Body of pancreas (tissue), 4 donors: ENCODE measurements at regions of chr20 and their contacts with region 1.

Region 1: DNA sequence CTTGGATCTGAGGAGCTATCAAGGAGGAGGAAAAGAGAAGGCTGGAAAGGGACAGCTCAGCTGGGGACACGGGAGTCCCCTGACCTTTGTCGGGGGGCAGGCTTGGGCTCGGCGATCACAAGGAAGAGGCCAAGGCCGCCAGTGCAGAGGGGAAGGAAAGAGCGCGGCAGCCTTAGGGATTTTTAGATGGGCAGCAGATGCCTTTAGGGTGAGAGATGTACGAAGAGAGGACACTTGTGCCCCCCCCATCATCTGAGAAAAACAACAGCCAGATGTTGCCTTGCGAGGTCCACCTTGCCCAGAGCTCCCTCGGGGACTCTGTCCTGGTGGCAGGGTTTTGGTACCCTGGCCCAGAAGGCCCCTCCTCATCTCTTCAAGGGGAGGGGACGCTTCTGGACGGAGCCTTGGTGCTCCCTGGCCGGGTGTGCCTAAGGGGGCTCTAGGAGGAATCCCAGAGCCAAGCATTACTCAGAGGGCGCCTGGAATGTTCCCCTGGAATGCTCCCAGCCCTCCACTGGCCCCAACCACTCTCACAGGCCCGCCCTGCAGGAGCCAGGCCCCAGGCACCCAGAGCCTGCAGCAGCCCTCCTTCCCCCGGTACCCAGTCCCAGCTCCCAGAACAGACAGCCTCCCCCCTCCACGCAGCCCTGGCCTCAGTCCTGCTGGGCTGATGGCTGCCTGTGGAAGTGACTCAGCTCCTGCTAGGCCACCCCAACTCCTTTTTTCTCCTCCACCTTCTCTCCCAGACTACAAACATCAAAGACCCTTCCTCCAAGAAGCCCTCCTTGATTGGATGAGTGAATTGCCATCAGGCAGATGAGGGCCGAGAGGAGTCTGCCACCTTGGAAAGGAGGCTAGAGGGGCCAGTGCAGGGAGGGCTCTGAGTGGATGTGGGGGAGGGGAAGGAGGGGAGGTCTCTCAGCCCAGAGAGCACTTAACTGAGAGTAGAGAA is 1.8 kb downstream of the ADAM33 start:
- DNase-seq: peak in 2 of 4 donors; percentile 19 to 36
- ATAC-seq: no peak
- H3K4me3 ChIP-seq: no peak overlapping the region
- H3K27ac ChIP-seq: peak overlapping the region in 1 of 4 donors; percentile 1
- H3K4me1 ChIP-seq: peaks cover 8% of the 10 kb centered on the region
- H3K27me3 ChIP-seq: peaks cover 0 to 20% of the 10 kb centered on the region in 2 donors
- CTCF ChIP-seq: no peak
- POLR2A ChIP-seq: no peak

Region 2: GRCh38 chr20:3854462-3854871 is 174.4 kb after region 1 on chr20:
- intact Hi-C with region 1: loop called (anchors 10 kb)
- DNase-seq: no peak
- ATAC-seq: no peak
- H3K4me3 ChIP-seq: no peak overlapping the region
- H3K27ac ChIP-seq: peak overlapping the region in 1 of 4 donors; percentile 21
- H3K4me1 ChIP-seq: peaks cover 2% of the 10 kb centered on the region
- H3K27me3 ChIP-seq: no peaks in the 10 kb centered on the region
- CTCF ChIP-seq: no peak
- POLR2A ChIP-seq: no peak

Region 3: GRCh38 chr20:4076671-4077070 is 396.6 kb after region 1 on chr20:
- intact Hi-C with region 1: loop called (anchors 10 kb)
- DNase-seq: peak in 3 of 4 donors; percentile 54 to 67 (median 60)
- ATAC-seq: peak; percentile 91
- H3K4me3 ChIP-seq: no peak overlapping the region
- H3K27ac ChIP-seq: peak overlapping the region in 3 of 4 donors; percentile 59 to 78 (median 68)
- H3K4me1 ChIP-seq: peaks cover 3% of the 10 kb centered on the region
- H3K27me3 ChIP-seq: no peaks in the 10 kb centered on the region
- CTCF ChIP-seq: no peak
- POLR2A ChIP-seq: no peak